Transverse colon (tissue), 4 donors: ENCODE measurements at regions of chr10 and their contacts with region 1.

Region 1: GRCh38 chr10:54702583-54703485 is 98.2 kb downstream of the PCDH15 start:
- DNase-seq: no peak
- H3K4me3 ChIP-seq: no peak overlapping the region
- H3K27ac ChIP-seq: no peak overlapping the region
- H3K4me1 ChIP-seq: no peaks in the 10 kb centered on the region
- H3K27me3 ChIP-seq: no peaks in the 10 kb centered on the region
- CTCF ChIP-seq: no peak
- EP300 ChIP-seq: no peak
- POLR2A ChIP-seq: no peak

Region 2: DNA sequence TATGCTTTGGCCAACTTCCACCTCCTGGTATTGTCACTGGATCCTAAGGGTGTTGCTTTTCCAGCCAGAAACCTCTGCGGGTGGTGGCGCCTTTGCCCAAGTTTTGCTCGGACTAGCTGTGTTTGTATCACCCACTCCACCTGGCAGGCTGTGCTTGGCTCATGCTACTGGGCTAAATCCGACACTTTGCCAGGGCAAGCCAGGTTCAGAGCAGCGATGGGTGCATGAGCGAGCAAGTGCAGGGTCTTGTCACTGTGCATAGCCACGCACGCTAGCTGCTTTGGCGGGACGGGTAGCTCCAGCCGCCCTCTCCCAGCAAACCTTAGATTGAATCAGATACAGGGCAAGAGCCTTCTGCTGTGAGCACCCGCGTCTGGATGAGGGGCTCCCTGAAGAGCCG is 639.3 kb before region 1 on chr10:
- in situ Hi-C with region 1: no loop called
- intact Hi-C with region 1: no loop called
- DNase-seq: no peak
- H3K4me3 ChIP-seq: no peak overlapping the region
- H3K27ac ChIP-seq: no peak overlapping the region
- H3K4me1 ChIP-seq: no peaks in the 10 kb centered on the region
- H3K27me3 ChIP-seq: no peaks in the 10 kb centered on the region
- CTCF ChIP-seq: no peak
- EP300 ChIP-seq: no peak
- POLR2A ChIP-seq: no peak

Region 3: DNA sequence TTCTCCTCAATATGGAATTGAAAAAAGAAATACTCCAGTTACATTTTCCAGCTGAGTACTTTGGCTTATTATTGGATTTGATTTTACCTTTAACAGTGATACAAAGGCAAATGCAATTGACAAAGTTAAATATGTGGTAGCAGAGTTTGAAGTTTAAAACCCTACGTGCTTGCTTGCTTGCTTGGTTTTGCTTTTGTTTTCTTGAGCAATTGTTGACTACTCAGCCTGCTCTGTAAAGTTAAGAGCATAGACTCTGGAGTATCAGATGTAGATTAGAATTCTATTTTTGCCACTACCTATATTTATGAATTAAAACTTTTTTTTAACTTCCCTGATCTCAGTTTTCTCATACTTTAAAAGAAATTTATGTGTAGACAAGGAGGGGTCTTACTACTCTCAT is 46.8 kb after region 1 on chr10:
- in situ Hi-C with region 1: no loop called
- intact Hi-C with region 1: loop called (anchors 1 kb)
- DNase-seq: no peak
- H3K4me3 ChIP-seq: no peak overlapping the region
- H3K27ac ChIP-seq: no peak overlapping the region
- H3K4me1 ChIP-seq: no peaks in the 10 kb centered on the region
- H3K27me3 ChIP-seq: no peaks in the 10 kb centered on the region
- CTCF ChIP-seq: no peak
- EP300 ChIP-seq: no peak
- POLR2A ChIP-seq: no peak